ENCODE measurements at regions of chr6 and their contacts with region 1.

Region 1: GRCh38 chr6:41424370-41425058 is 89.1 kb downstream of the NCR2 start:
- DNase-seq: peak; percentile 78
- H3K4me3 Mint-ChIP-seq: no peak overlapping the region
- H3K27ac Mint-ChIP-seq: no peak overlapping the region
- H3K4me1 Mint-ChIP-seq: no peaks in the 10 kb centered on the region
- H3K27me3 Mint-ChIP-seq: peaks cover 23% of the 10 kb centered on the region
- CTCF ChIP-seq: peak; percentile 65

Region 2: DNA sequence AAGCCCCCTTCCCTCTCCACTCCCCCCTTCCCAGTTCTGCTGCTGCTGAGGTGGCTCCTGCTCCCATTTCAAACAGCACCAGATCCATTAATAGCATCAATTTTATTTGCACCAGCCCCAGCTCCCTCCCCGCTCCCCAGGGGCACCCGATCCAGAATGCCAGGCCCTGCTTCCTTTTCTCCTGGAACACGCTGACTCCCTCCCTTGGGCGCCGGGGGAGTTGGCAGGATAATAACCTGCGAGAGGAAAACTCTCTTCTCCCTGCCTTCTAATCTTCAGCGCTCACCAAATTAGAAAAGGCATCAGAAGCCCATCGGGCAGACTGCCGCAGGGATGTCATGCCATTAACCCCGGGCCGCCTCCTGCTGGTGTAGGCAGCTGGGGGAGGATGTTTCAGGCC is 11.3 kb before region 1 on chr6:
- CTCF ChIA-PET with region 1: interaction called, 16 read pairs
- POLR2A ChIA-PET with region 1: no interaction called
- intact Hi-C with region 1: no loop called
- DNase-seq: no peak
- H3K4me3 Mint-ChIP-seq: no peak overlapping the region
- H3K27ac Mint-ChIP-seq: no peak overlapping the region
- H3K4me1 Mint-ChIP-seq: no peaks in the 10 kb centered on the region
- H3K27me3 Mint-ChIP-seq: peaks cover 59% of the 10 kb centered on the region
- CTCF ChIP-seq: no peak

Region 3: GRCh38 chr6:41545703-41546474 is 121.4 kb after region 1 on chr6 and contains the start of gene FOXP4:
- CTCF ChIA-PET with region 1: interaction called, 4 read pairs
- POLR2A ChIA-PET with region 1: no interaction called
- intact Hi-C with region 1: loop called (anchors 2 kb)
- DNase-seq: peak; percentile 94
- H3K4me3 Mint-ChIP-seq: peak within 1 kb of the TSS; percentile 98
- H3K27ac Mint-ChIP-seq: peak within 1 kb of the TSS; percentile 70
- H3K4me1 Mint-ChIP-seq: peaks cover 9% of the 10 kb centered on the region
- H3K27me3 Mint-ChIP-seq: no peaks in the 10 kb centered on the region
- CTCF ChIP-seq: no peak
- total RNA-seq, gene FOXP4: 16.5 and 18.4 TPM in 2 replicates

Region 4: DNA sequence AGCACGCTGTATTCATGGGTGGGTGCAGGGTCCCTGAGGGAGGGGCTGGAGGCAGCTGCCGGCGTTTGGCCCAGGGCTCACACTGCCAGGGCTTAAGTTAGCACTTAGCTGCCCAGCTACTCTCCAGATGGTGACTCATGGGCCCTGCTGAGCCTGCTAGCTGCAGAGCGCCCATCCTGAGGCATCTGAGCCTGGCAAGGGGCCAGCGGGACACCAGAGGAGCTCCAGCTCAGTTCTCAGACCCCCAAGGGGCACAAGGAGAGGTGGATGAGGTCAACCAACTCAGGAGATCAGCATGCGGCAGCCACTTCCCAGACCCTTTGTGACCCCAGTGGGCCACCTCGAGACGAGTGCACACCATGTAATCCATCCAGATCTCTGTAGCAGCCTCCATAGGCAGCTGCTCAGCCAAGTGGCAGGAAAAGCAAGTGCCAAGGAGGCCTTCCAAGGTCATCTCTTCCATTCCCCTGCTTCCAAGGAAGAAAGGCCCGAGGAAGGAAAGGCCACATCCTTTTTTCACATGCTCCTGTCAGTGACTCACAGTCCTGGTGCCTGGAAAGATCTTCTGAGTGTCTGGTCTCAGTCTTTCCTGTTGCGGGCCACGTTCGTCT is 157.0 kb after region 1 on chr6:
- CTCF ChIA-PET with region 1: interaction called, 11 read pairs
- POLR2A ChIA-PET with region 1: no interaction called
- intact Hi-C with region 1: no loop called
- DNase-seq: peak; percentile 87
- H3K4me3 Mint-ChIP-seq: no peak overlapping the region
- H3K27ac Mint-ChIP-seq: peak overlapping the region; percentile 49
- H3K4me1 Mint-ChIP-seq: peaks cover 37% of the 10 kb centered on the region
- H3K27me3 Mint-ChIP-seq: no peaks in the 10 kb centered on the region
- CTCF ChIP-seq: no peak

Region 5: DNA sequence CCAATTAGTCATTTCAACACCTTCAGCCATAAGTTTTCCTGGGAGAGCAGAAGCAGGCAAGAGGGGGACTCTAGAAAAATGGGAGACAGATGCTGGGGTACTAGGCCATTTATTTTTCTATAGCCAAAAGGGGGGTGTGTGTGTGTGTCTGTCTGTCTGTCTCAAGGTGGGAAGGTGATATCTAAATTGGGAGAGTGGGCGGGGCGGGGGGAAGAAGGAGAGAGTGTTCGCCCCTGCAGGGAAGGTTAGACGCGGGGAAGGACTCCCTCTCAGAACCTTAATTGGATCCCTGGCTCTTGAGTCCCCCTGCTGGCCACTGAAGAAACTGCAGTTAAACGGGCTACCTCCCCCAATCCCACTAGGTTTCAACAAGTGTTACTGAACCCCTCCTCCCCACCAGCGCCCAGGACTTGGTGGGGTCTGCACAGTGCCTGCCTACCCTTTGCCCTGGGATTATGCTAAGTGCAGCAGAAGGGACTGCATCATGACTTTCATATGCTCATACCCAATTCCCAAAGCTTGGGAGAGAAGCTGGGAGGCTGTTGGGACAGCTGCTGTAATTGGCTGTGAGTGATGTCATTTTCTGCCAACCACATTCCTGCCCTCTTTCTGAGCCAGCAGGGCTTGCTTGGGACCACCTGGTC is 167.5 kb after region 1 on chr6:
- CTCF ChIA-PET with region 1: interaction called, 139 read pairs
- POLR2A ChIA-PET with region 1: interaction called, 3 read pairs
- intact Hi-C with region 1: loop called (anchors 1 kb)
- DNase-seq: peak; percentile 76
- H3K4me3 Mint-ChIP-seq: no peak overlapping the region
- H3K27ac Mint-ChIP-seq: no peak overlapping the region
- H3K4me1 Mint-ChIP-seq: no peaks in the 10 kb centered on the region
- H3K27me3 Mint-ChIP-seq: no peaks in the 10 kb centered on the region
- CTCF ChIP-seq: peak; percentile 94

Region 6: GRCh38 chr6:41958022-41958856 is 533.7 kb after region 1 on chr6:
- CTCF ChIA-PET with region 1: no interaction called
- POLR2A ChIA-PET with region 1: no interaction called
- intact Hi-C with region 1: no loop called
- DNase-seq: no peak
- H3K4me3 Mint-ChIP-seq: no peak overlapping the region
- H3K27ac Mint-ChIP-seq: no peak overlapping the region
- H3K4me1 Mint-ChIP-seq: peaks cover 8% of the 10 kb centered on the region
- H3K27me3 Mint-ChIP-seq: no peaks in the 10 kb centered on the region
- CTCF ChIP-seq: no peak